PC-9 (cell line): ENCODE measurements at regions of chr2 and their contacts with region 1.

Region 1: DNA sequence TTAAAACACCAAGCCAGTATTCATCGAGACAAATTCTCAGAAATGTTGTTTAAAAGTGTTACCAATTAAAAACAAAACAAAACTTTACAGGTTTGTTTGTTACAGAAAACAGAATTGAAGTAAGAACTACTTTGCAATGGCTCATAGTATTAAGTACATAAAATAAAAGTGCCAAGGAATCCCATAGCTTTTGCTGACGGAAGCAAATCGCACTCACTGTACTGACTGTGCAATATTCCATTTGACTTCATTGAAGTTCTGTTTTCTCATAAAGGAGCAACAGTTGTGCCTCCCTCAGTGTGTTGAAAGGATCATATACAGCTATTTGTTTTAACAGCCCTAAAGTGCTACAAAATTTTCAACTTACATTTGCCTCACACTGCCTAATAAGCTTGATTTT is 507.8 kb downstream of the SPAG16 start:
- DNase-seq: no peak
- H3K4me3 ChIP-seq: no peak overlapping the region
- H3K27ac ChIP-seq: no peak overlapping the region
- H3K4me1 ChIP-seq: no peaks in the 10 kb centered on the region
- H3K27me3 ChIP-seq: no peaks in the 10 kb centered on the region
- CTCF ChIP-seq: no peak

Region 2: GRCh38 chr2:213740453-213740852 is 51.6 kb before region 1 on chr2:
- CTCF ChIA-PET with region 1: no interaction called
- POLR2A ChIA-PET with region 1: no interaction called
- intact Hi-C with region 1: no loop called
- DNase-seq: no peak
- H3K4me3 ChIP-seq: no peak overlapping the region
- H3K27ac ChIP-seq: no peak overlapping the region
- H3K4me1 ChIP-seq: no peaks in the 10 kb centered on the region
- H3K27me3 ChIP-seq: no peaks in the 10 kb centered on the region
- CTCF ChIP-seq: no peak

Region 3: DNA sequence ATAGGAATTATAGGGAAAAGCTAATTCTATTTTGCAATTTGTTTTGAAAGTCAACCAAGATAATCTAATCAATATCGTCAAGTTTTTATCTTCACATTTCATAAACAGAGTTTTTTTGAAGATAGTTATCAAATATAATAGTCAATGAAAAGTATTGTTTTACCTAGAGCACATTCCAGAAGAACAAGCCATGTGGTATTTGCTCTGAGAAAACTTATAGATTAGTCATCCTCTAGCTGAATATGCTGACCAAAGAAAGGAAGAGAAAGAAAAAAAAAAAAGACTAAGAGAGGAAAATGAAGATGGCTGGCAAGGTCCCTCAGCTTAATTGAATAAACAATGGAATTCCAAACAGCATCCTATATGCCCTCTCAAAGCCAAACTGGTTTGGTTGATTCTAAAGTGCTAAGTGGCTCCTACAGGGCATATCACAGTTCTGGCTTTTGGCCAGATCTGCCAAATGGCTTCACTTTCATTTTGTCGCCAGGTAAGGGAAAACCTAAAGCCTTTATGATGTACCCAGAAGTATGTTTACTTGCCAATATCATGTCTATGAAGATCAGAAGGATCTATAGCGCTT is 751.4 kb after region 1 on chr2:
- CTCF ChIA-PET with region 1: no interaction called
- POLR2A ChIA-PET with region 1: interaction called, 10 read pairs
- intact Hi-C with region 1: no loop called
- DNase-seq: peak; percentile 40 to 66
- H3K4me3 ChIP-seq: no peak overlapping the region
- H3K27ac ChIP-seq: no peak overlapping the region
- H3K4me1 ChIP-seq: 0 out of 2 replicates have a peak, but pooled peaks cover 8% of the 10 kb centered on the region
- H3K27me3 ChIP-seq: no peaks in the 10 kb centered on the region
- CTCF ChIP-seq: no peak